ENCODE measurements at regions of chr6 and their contacts with region 1.

Region 1: GRCh38 chr6:39029156-39030011 is 19.2 kb upstream of the GLP1R start:
- DNase-seq: peak; percentile 35
- H3K4me3 Mint-ChIP-seq: no peak overlapping the region
- H3K27ac Mint-ChIP-seq: no peak overlapping the region
- H3K4me1 Mint-ChIP-seq: peaks cover 3% of the 10 kb centered on the region
- H3K27me3 Mint-ChIP-seq: peaks cover 55% of the 10 kb centered on the region

Region 2: DNA sequence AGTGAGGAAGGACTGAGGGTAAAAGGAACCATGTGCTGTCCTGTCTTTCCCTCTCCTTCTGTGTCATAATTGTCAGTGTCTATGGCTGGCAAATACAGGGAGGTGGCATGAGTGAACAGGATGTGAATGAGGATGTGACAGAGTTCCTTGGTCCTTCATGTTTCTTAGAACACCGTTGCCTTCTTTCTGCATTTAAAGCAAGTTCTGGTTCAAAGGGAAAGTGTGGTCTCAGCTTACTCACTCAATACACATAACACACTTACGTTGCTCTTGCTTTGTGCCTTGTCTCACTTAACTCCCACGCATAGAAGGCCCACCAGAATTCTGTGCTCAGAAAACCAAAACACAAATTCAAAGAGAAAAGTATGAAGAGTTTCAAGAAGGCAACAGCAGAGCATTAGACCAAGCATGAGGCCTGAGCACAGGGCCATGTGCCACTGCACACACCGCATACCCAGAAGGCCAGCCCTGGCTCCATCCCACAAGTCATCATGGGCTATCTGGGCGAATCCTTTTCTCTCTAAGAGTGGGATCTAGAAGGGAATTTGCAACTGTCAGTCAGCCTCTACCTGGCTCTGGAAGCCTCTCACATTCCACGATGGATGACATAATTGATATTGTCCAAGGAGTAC is 124.5 kb after region 1 on chr6:
- intact Hi-C with region 1: loop called (anchors 5 kb)
- DNase-seq: no peak
- H3K4me3 Mint-ChIP-seq: no peak overlapping the region
- H3K27ac Mint-ChIP-seq: peak overlapping the region; percentile 80
- H3K4me1 Mint-ChIP-seq: peaks cover 49% of the 10 kb centered on the region
- H3K27me3 Mint-ChIP-seq: no peaks in the 10 kb centered on the region

Measured in activated T-helper 2 cell treated with anti-CD3 and anti-CD28 coated beads, Interferon-gamma antibody, Interleukin-2, Interleukin-4, amounts not matched to agents 10 μg/mL and 5 μg/mL and 100 μg/mL, durations not matched to agents 14 hours and 24 hours and 36 hours (primary cell).